PC-9 (cell line): ENCODE measurements at regions of chr2 and their contacts with region 1.

Region 1: GRCh38 chr2:217182926-217183325 is 323.1 kb upstream of the TNP1 start:
- DNase-seq: no peak
- H3K4me3 ChIP-seq: no peak overlapping the region
- H3K27ac ChIP-seq: no peak overlapping the region
- H3K4me1 ChIP-seq: no peaks in the 10 kb centered on the region
- H3K27me3 ChIP-seq: no peaks in the 10 kb centered on the region
- CTCF ChIP-seq: no peak

Region 2: GRCh38 chr2:217193431-217194340 is 10.8 kb after region 1 on chr2:
- CTCF ChIA-PET with region 1: no interaction called
- POLR2A ChIA-PET with region 1: no interaction called
- intact Hi-C with region 1: loop called (anchors 1 kb)
- DNase-seq: no peak
- H3K4me3 ChIP-seq: no peak overlapping the region
- H3K27ac ChIP-seq: no peak overlapping the region
- H3K4me1 ChIP-seq: no peaks in the 10 kb centered on the region
- H3K27me3 ChIP-seq: no peaks in the 10 kb centered on the region
- CTCF ChIP-seq: no peak